Dorsolateral prefrontal cortex (tissue), 120 donors: ENCODE measurements at regions of chr2 and their contacts with region 1.

Region 1: GRCh38 chr2:183038341-183039300 is at the start of gene NCKAP1:
- DNase-seq: peak; percentile 59 to 88 (median 76)
- H3K4me3 ChIP-seq: peak within 1 kb of the TSS; percentile 52 to 93 (median 81)
- H3K27ac ChIP-seq: peak within 1 kb of the TSS; percentile 58 to 99 (median 95)
- H3K27me3 ChIP-seq: no peaks in the 10 kb centered on the region
- CTCF ChIP-seq: peak; percentile 45 to 99 (median 86)
- total RNA-seq, gene NCKAP1: 121 to 310 (median 210) TPM

Region 2: GRCh38 chr2:182763311-182763912 is 275.2 kb before region 1 on chr2:
- intact Hi-C with region 1: loop called in 1 of 2 experiments (anchors 2 kb)
- DNase-seq: peak in 1 of 10 donors; percentile 4
- H3K4me3 ChIP-seq: no peak overlapping the region
- H3K27ac ChIP-seq: no peak overlapping the region
- H3K27me3 ChIP-seq: no peaks in the 10 kb centered on the region
- CTCF ChIP-seq: peak in 55 of 56 donors; percentile 15 to 67 (median 48)

Region 3: GRCh38 chr2:183078465-183079138 is 40.0 kb after region 1 on chr2 and contains the start of gene DUSP19:
- intact Hi-C with region 1: loop called (anchors 2 kb)
- DNase-seq: peak; percentile 58 to 97 (median 90)
- H3K4me3 ChIP-seq: peak within 1 kb of the TSS; percentile 57 to 96 (median 80)
- H3K27ac ChIP-seq: peak within 1 kb of the TSS; percentile 51 to 99 (median 88)
- H3K27me3 ChIP-seq: no peaks in the 10 kb centered on the region
- CTCF ChIP-seq: peak in 16 of 56 donors; percentile 2 to 29 (median 16)
- total RNA-seq, gene DUSP19: 5.2 to 20.4 (median 11.3) TPM

Region 4: DNA sequence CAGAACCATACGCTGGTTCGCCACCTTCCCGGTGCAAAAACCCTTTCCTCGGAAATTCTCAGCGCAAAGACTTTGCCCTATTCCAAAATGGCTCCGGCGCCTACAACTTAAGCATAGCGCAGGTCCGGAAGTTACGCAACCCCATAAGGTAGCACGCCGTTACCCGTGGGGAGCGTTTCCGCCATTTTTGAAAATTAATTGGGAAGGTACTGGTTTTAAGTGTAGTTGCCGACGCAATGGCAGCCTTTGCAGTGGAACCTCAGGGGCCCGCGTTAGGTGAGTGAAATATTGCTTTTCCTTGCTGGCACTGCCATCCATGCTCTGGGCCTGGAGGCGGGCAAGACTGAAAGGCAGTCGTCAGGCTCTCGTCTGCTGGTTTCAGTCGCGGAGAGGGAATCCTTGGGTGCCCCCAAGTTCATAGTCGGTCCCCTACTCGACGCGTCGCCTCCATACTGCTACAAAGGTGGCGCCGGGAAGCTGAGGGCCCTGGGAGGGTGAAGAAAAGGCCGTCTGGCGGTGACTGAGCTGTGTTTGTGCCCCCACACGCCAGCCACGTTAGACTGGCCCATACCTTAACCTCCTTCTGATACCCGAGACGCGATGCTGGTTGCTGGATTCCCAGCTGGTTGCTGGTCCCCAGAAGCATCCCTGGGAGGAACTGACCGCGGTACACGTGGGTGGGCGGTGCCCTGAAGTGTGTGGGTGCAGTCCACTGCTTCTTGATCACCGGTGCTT is 85.8 kb after region 1 on chr2 and contains the start of gene NUP35:
- intact Hi-C with region 1: loop called (anchors 5 kb)
- DNase-seq: peak; percentile 78 to 94 (median 88)
- H3K4me3 ChIP-seq: peak within 1 kb of the TSS; percentile 60 to 99 (median 89)
- H3K27ac ChIP-seq: peak within 1 kb of the TSS in 58 of 59 donors; percentile 27 to 96 (median 86)
- H3K27me3 ChIP-seq: no peaks in the 10 kb centered on the region
- CTCF ChIP-seq: peak in 15 of 56 donors; percentile 6 to 42 (median 20)
- total RNA-seq, gene NUP35: 10.5 to 27.4 (median 17.8) TPM